Kidney (tissue), 22 donors: ENCODE measurements at regions of chr5 and their contacts with region 1.

Region 1: DNA sequence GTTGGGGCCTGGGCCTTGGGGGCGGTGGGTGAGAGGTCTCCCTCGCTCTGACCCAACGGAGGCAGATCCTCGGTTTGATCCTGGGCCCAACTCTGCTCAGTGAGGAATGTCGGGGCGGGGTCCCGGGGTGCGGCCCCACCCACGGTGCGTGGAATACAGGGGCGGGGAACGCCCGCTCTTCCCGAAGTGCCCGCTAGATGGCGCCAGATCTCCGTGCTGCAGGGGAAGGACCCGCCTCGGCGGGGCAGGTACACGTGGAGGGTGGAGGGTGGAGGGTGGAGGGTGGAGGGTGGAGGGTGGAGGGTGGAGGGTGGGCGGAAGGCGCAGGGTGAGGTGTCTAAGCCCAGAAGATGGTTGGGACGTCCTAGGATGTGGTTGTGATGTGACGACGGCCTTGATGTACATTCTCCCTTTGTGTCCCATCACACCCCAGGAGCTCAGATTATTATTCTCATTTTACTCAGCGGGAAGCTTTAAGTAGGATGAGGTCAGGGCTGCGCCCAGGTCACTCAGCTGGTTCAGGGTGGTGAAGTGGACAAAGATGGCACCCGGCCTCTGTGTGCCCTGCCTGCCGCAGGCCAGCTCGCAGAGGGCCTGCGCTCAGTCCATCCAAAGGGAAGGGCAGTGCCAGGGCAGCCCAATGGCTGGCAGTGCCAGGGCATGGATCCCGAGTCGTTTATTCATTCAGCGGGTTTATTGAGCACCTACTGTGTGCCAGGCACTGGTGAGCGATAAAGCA is 9.4 kb upstream of the RPS14 start:
- DNase-seq: peak; percentile 73 to 92 (median 83)
- H3K4me3 ChIP-seq: peak overlapping the region in 1 of 3 donors; percentile 30
- H3K27ac ChIP-seq: no peak overlapping the region
- H3K4me1 ChIP-seq: no peaks in the 10 kb centered on the region
- H3K27me3 ChIP-seq: no peaks in the 10 kb centered on the region
- CTCF ChIP-seq: peak; percentile 91

Region 2: GRCh38 chr5:150532996-150533395 is 74.0 kb after region 1 on chr5:
- intact Hi-C with region 1: loop called (anchors 5 kb)
- DNase-seq: peak in 1 of 5 donors; percentile 63
- H3K4me3 ChIP-seq: no peak overlapping the region
- H3K27ac ChIP-seq: no peak overlapping the region
- H3K4me1 ChIP-seq: no peaks in the 10 kb centered on the region
- H3K27me3 ChIP-seq: no peaks in the 10 kb centered on the region
- CTCF ChIP-seq: no peak

Region 3: GRCh38 chr5:150544611-150545219 is 85.7 kb after region 1 on chr5:
- intact Hi-C with region 1: loop called (anchors 5 kb)
- DNase-seq: peak in 4 of 5 donors; percentile 57 to 73 (median 62)
- H3K4me3 ChIP-seq: no peak overlapping the region
- H3K27ac ChIP-seq: no peak overlapping the region
- H3K4me1 ChIP-seq: peaks cover 0 to 27% (median 22%) of the 10 kb centered on the region in 3 donors
- H3K27me3 ChIP-seq: no peaks in the 10 kb centered on the region
- CTCF ChIP-seq: peak; percentile 61